Ascending aorta (tissue), 2 donors: ENCODE measurements at regions of chr3 and their contacts with region 1.

Region 1: DNA sequence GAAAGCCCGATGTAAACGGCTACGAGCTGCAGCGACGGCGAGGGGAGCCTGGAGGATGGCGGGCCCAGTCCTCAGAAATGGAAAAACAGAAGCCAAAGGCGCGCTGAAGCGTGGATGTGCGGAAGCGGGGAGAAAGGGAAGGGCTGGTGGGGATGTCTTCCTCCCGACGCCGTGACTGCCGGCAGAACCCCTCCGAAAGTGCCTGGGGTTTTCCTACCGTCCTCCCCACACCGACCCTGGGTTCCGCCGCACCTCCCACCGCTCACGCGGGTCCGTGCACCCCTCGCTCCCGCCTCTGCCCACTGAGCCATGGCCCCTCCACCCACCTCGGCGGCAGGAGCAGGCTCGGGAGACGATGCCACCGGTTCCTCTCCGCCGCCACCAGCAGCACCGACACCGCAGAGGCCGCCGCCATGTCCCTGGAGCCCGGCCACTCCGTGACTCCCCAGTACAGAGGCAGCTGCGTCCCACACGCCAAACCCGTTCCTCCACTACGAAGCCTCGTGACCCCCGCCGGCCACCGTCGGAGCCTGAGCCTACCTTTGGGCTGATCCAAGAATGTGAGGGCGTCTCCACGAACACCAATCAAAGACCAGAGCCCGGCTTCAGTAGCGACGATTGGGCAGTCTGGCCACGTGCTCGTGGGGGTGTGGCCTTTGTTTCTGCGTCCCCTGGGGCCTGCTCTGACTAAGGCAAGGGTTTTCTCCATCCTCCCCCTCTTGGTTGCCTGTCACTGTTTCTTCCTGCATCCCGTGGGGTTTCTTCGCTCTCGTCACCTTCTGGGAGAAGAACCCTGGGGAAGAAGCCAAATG is at the start of gene MCCC1:
- DNase-seq: peak; percentile 96 to 99
- H3K4me3 ChIP-seq: peak within 1 kb of the TSS; percentile 65 to 83
- H3K27ac ChIP-seq: peak within 1 kb of the TSS; percentile 90 to 91
- H3K4me1 ChIP-seq: peaks cover 0 to 15% of the 10 kb centered on the region in 2 donors
- H3K27me3 ChIP-seq: no peaks in the 10 kb centered on the region
- CTCF ChIP-seq: no peak
- total RNA-seq, gene MCCC1: 10.3 TPM

Region 2: GRCh38 chr3:182792901-182793662 is 306.1 kb before region 1 on chr3 and contains the start of gene ATP11B:
- intact Hi-C with region 1: loop called (anchors 10 kb)
- DNase-seq: peak; percentile 23 to 83
- H3K4me3 ChIP-seq: peak within 1 kb of the TSS; percentile 74 to 89
- H3K27ac ChIP-seq: peak within 1 kb of the TSS; percentile 85 to 96
- H3K4me1 ChIP-seq: peaks cover 0 to 18% of the 10 kb centered on the region in 2 donors
- H3K27me3 ChIP-seq: no peaks in the 10 kb centered on the region
- CTCF ChIP-seq: no peak
- total RNA-seq, gene ATP11B: 117 TPM

Region 3: DNA sequence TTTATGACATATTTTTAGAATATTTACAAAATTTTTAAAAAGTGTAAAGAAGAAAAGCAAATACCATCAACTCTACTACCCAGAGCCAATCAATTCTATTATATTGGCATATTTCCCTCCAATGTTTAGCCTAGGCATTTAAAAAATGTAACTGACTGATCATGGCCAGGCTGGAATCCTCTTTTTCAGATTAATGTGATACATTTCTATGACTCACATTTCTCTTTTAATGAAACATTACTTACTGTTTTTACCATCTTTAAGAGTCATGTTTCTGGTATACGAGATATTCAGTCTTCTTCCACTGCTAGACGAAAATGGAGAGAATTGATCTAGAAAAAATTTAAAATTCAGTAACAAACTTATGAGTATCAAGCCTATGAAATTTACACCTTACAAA is 65.5 kb before region 1 on chr3:
- intact Hi-C with region 1: no loop called
- DNase-seq: no peak
- H3K4me3 ChIP-seq: no peak overlapping the region
- H3K27ac ChIP-seq: no peak overlapping the region
- H3K4me1 ChIP-seq: no peaks in the 10 kb centered on the region
- H3K27me3 ChIP-seq: no peaks in the 10 kb centered on the region
- CTCF ChIP-seq: no peak

Region 4: DNA sequence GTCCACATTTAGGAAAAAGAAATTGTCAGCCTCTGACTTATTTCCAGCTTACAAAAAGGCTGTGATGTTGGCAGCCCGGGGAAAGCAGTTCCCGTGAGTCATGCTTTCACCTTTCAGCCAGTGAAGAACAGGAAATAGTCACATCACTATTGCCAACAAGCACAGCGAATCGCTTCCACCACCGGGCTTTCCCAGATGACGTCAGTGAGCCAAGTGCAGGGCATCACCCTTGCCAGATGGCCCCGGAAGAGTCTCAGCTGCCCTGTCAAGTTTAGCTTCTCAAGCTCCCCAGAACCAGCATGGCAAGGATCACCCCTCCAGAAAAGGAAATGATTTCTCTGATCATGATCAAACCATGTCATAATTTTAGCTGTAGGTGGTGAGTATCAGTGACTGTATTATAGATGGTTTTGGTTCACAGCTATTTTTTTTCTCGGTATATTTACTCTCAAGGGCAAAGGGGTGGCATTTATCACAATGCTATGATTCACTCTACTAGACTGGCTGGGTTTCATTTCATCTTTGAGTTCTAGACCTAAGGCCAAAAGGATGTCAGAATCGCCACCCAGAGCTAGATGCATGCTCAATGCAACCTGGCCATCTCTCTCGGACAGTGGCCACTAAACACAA is 186.7 kb after region 1 on chr3:
- intact Hi-C with region 1: loop called (anchors 2 kb)
- DNase-seq: peak; percentile 90 to 97
- H3K4me3 ChIP-seq: no peak overlapping the region
- H3K27ac ChIP-seq: peak overlapping the region; percentile 83 to 89
- H3K4me1 ChIP-seq: peaks cover 5 to 27% of the 10 kb centered on the region in 2 donors
- H3K27me3 ChIP-seq: no peaks in the 10 kb centered on the region
- CTCF ChIP-seq: no peak

Region 5: GRCh38 chr3:183635431-183636220 is 536.4 kb after region 1 on chr3 and contains the start of gene KLHL24:
- intact Hi-C with region 1: loop called (anchors 2 kb)
- DNase-seq: peak; percentile 83 to 95
- H3K4me3 ChIP-seq: peak within 1 kb of the TSS; percentile 91 to 95
- H3K27ac ChIP-seq: peak within 1 kb of the TSS; percentile 92 to 100
- H3K4me1 ChIP-seq: peaks cover 0 to 16% of the 10 kb centered on the region in 2 donors
- H3K27me3 ChIP-seq: no peaks in the 10 kb centered on the region
- CTCF ChIP-seq: peak in 1 of 3 experiments; percentile 6
- total RNA-seq, gene KLHL24: 26.6 TPM

Region 6: DNA sequence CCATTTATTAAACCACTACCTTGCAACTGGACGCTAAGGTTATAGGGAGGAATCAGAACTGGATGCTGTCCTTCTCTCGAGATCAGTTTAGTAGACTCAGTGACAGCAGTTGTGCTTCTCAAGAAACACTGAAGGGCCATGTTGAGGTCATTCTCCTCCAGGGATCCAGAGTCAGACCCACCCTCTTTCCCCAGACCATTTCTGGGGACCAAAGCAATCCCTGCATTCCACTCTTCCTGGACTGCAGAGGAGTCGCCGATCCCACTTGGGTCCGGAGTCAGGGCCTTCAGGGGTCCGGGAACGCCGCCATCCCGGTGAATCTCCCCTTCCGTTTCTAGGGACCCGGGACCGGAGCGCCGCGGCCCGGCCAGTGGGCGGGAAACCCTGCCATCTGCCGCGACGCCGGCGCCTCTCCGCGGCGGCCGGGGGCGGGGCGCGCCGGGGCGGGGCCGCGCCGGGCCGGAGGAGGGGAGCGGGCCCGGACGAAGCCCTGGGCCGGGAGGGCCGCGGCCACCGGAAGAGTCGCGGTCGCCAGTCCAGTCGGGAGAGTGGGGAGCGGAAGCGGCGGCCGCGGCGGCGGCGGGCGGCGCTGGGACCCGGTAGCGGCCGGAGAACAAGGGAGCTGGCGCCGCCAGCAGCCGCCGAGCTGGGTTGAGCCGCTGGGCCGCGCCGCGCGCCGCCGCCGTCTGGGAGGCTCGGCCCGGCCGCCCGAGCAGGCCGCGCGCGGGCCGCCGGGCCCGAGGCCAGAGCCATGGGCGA is 1055.8 kb after region 1 on chr3 and contains the start of gene DVL3:
- intact Hi-C with region 1: loop called (anchors 10 kb)
- DNase-seq: peak in 1 of 2 donors; percentile 81
- H3K4me3 ChIP-seq: peak within 1 kb of the TSS; percentile 80 to 97
- H3K27ac ChIP-seq: peak within 1 kb of the TSS; percentile 87 to 89
- H3K4me1 ChIP-seq: peaks cover 9 to 21% of the 10 kb centered on the region in 2 donors
- H3K27me3 ChIP-seq: no peaks in the 10 kb centered on the region
- CTCF ChIP-seq: no peak
- total RNA-seq, gene DVL3: 36.6 TPM